ENCODE measurements at regions of chr19 and their contacts with region 1.

Region 1: DNA sequence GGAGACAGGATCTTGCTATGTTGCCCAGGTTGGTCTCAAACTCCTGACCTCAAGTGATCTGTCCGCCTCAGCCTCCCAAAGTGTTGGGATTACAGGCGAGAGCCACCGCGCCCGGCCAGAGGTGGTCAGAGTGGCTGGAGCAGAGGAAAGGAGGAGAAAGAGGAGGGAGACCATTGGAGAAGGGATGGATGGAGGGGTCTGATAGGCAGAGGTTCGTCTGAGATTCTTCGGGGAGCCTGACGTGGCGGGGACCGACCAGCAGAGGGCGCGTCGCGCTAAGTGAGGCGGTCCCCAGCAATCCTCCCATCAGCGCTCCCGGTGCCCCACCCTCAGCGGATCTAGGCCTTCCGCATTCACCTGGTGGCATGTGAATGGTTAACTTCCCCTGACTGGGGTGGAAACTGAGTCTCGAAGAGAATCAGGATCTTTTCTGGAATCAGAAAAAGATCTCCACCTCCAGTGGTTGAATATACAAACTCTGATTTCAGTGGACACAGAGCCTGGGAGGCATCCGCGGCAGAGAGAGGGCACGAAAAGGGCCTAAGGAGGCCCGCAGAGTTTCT is 8.8 kb downstream of the GTPBP3 start:
- DNase-seq: peak; percentile 88
- ATAC-seq: peak; percentile 82

Region 2: DNA sequence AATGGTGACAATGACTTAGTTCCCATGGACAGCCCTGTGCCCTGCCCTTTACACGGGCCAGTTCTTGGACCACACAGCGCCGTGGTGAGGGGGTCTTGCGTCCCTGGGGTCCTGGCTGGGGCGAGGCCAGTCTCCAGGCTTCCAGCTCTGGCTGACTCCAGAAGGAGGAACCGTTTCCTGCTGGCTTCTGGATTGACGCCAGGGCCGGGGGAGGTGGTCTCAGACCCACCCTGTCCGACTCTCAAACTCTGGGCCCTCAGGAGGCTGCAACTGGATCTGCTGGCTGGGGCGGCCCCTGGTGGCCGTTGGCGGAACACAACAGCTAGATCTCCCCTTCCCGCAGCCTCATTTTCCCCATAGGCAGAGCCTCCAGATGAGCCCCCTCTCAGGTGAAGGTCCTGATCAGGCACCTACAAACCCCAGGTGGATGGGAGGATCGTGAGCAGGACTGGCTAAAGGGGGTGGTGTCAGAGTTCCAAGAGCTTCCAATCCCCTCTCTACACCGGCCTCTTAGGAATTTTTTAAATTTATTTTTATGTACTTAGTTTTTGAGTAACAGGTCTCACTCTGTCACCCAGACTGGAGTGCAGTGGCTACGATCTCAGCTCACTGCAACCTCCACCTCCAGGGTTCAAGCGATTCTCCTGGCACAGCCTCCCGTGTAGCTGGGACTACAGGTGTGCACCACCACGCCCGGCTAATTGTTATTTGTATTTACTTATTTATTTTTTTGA is 39.9 kb after region 1 on chr19:
- intact Hi-C with region 1: loop called (anchors 5 kb)
- DNase-seq: peak; percentile 78
- ATAC-seq: peak; percentile 65

Region 3: DNA sequence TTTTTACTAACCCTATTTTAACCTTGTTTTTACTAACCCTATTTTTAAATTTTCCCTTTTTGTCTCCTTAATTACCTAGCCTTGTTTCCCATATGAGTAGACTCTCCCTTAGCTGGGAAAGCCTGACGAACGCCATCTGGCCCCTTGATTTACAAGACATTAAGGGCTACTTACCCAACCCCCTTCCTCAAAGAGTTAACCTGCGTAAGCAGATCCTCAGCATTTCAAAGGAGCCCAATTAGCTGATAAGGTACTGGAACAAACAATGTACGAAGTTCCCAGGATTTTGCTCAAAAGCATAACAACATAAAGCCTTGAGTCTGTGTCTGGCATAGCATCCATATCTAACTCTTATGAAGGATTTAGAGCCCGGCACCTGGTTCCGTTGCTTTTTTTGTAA is 68.9 kb after region 1 on chr19:
- intact Hi-C with region 1: no loop called
- DNase-seq: no peak
- ATAC-seq: no peak

Measured in left ventricle myocardium superior (tissue), 1 donor.